Naive thymus-derived CD8-positive, alpha-beta T cell (primary cell): ENCODE measurements at regions of chr12 and their contacts with region 1.

Region 1: GRCh38 chr12:132761032-132761920 is at the start of gene ANKLE2:
- DNase-seq: peak; percentile 28 to 78 (median 44)
- ATAC-seq: peak; percentile 44 to 54
- H3K4me3 Mint-ChIP-seq: peak within 1 kb of the TSS; percentile 86 to 97 (median 96)
- H3K27ac Mint-ChIP-seq: peak within 1 kb of the TSS; percentile 93 to 99 (median 98)
- H3K4me1 Mint-ChIP-seq: peaks cover 16 to 35% (median 32%) of the 10 kb centered on the region in 4 donors
- H3K27me3 Mint-ChIP-seq: no peaks in the 10 kb centered on the region
- polyA plus RNA-seq, gene ANKLE2: 17.8 to 32.1 (median 23.0) TPM

Region 2: GRCh38 chr12:132772606-132773005 is 11.3 kb after region 1 on chr12:
- POLR2A ChIA-PET with region 1: interaction called, 16 read pairs
- DNase-seq: no peak
- ATAC-seq: no peak
- H3K4me3 Mint-ChIP-seq: peak overlapping the region in 5 of 10 donors; percentile 12 to 56 (median 39)
- H3K27ac Mint-ChIP-seq: peak overlapping the region in 7 of 10 donors; percentile 39 to 75 (median 65)
- H3K4me1 Mint-ChIP-seq: peaks cover 30 to 79% (median 65%) of the 10 kb centered on the region in 4 donors
- H3K27me3 Mint-ChIP-seq: no peaks in the 10 kb centered on the region